Transverse colon (tissue), 4 donors: ENCODE measurements at regions of chr2 and their contacts with region 1.

Region 1: DNA sequence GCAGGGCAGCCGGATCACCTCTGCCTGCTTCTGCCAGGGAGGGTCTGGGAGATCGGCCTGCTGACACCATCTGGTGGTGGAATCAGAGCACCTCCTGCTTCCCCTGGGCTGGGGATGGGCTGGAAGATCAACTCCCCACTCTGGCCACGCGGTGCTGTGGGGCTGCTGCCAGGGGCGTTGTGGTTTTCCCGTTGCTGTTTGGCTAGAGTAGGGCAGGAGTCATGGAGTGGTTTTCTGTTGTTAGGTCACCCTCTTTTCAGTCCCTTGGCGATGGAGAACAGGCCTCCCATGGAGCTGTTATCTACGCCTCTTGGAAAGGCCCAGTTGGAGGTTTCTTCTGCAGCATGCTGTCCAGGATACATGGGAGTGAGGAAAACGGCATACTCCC is 15.2 kb downstream of the BCL2L11 start:
- DNase-seq: no peak
- H3K4me3 ChIP-seq: no peak overlapping the region
- H3K27ac ChIP-seq: no peak overlapping the region
- H3K4me1 ChIP-seq: peaks cover 0 to 6% (median 0%) of the 10 kb centered on the region in 4 donors
- H3K27me3 ChIP-seq: no peaks in the 10 kb centered on the region
- CTCF ChIP-seq: no peak
- EP300 ChIP-seq: no peak
- POLR2A ChIP-seq: no peak

Region 2: GRCh38 chr2:110804915-110805314 is 331.0 kb before region 1 on chr2:
- in situ Hi-C with region 1: loop called in 1 of 4 experiments (anchors 25 kb)
- intact Hi-C with region 1: no loop called
- DNase-seq: no peak
- H3K4me3 ChIP-seq: no peak overlapping the region
- H3K27ac ChIP-seq: no peak overlapping the region
- H3K4me1 ChIP-seq: no peaks in the 10 kb centered on the region
- H3K27me3 ChIP-seq: no peaks in the 10 kb centered on the region
- CTCF ChIP-seq: no peak
- EP300 ChIP-seq: no peak
- POLR2A ChIP-seq: no peak